ENCODE measurements at regions of chr2 and their contacts with region 1.

Region 1: GRCh38 chr2:96260404-96261260 is 5.2 kb downstream of the TMEM127 start:
- DNase-seq: peak; percentile 93
- ATAC-seq: peak; percentile 88
- H3K4me3 ChIP-seq: peak overlapping the region in 1 of 2 experiments; percentile 5; a peak in 1 of 4 replicates
- H3K27ac ChIP-seq: peak overlapping the region; percentile 67
- H3K4me1 ChIP-seq: peaks cover 36% of the 10 kb centered on the region
- H3K27me3 ChIP-seq: no peaks in the 10 kb centered on the region
- CTCF ChIP-seq: peak; percentile 83

Region 2: GRCh38 chr2:95552911-95553310 is 707.7 kb before region 1 on chr2:
- CTCF ChIA-PET with region 1: no interaction called
- POLR2A ChIA-PET with region 1: no interaction called
- in situ Hi-C with region 1: no loop called
- intact Hi-C with region 1: no loop called
- DNase-seq: no peak
- ATAC-seq: no peak
- H3K4me3 ChIP-seq: no peak overlapping the region
- H3K27ac ChIP-seq: no peak overlapping the region
- H3K4me1 ChIP-seq: no peaks in the 10 kb centered on the region
- H3K27me3 ChIP-seq: peaks cover 4% of the 10 kb centered on the region; the same call in 1 of the 2 replicates
- CTCF ChIP-seq: no peak

Region 3: GRCh38 chr2:96116879-96117697 is 143.5 kb before region 1 on chr2:
- CTCF ChIA-PET with region 1: no interaction called
- POLR2A ChIA-PET with region 1: no interaction called
- in situ Hi-C with region 1: no loop called
- intact Hi-C with region 1: no loop called
- DNase-seq: no peak
- ATAC-seq: peak; percentile 89
- H3K4me3 ChIP-seq: peak overlapping the region; percentile 33 to 44
- H3K27ac ChIP-seq: no peak overlapping the region
- H3K4me1 ChIP-seq: no peaks in the 10 kb centered on the region
- H3K27me3 ChIP-seq: no peaks in the 10 kb centered on the region; the same call in 1 of the 2 replicates
- CTCF ChIP-seq: peak; percentile 98

Region 4: GRCh38 chr2:96208143-96209010 is 52.3 kb before region 1 on chr2 and contains the start of gene STARD7:
- CTCF ChIA-PET with region 1: no interaction called
- POLR2A ChIA-PET with region 1: no interaction called
- in situ Hi-C with region 1: no loop called
- intact Hi-C with region 1: loop called (anchors 5 kb)
- DNase-seq: peak; percentile 83
- ATAC-seq: peak; percentile 98
- H3K4me3 ChIP-seq: peak within 1 kb of the TSS; percentile 73 to 91
- H3K27ac ChIP-seq: peak within 1 kb of the TSS; percentile 98
- H3K4me1 ChIP-seq: peaks cover 33% of the 10 kb centered on the region
- H3K27me3 ChIP-seq: no peaks in the 10 kb centered on the region
- CTCF ChIP-seq: peak; percentile 46; the same call in 1 of the 2 replicates
- total RNA-seq, gene STARD7: 133 TPM

Region 5: GRCh38 chr2:96231316-96231715 is 29.3 kb before region 1 on chr2:
- CTCF ChIA-PET with region 1: interaction called, 3 read pairs
- POLR2A ChIA-PET with region 1: interaction called, 12 read pairs
- in situ Hi-C with region 1: no loop called
- intact Hi-C with region 1: no loop called
- DNase-seq: no peak
- ATAC-seq: no peak
- H3K4me3 ChIP-seq: no peak overlapping the region
- H3K27ac ChIP-seq: no peak overlapping the region
- H3K4me1 ChIP-seq: no peaks in the 10 kb centered on the region
- H3K27me3 ChIP-seq: no peaks in the 10 kb centered on the region
- CTCF ChIP-seq: no peak

Region 6: GRCh38 chr2:96485751-96486651 is 225.4 kb after region 1 on chr2:
- CTCF ChIA-PET with region 1: interaction called, 7 read pairs
- POLR2A ChIA-PET with region 1: interaction called, 14 read pairs
- in situ Hi-C with region 1: no loop called
- intact Hi-C with region 1: no loop called
- DNase-seq: no peak
- ATAC-seq: peak; percentile 93
- H3K4me3 ChIP-seq: peak overlapping the region; percentile 27 to 51
- H3K27ac ChIP-seq: peak overlapping the region; percentile 66
- H3K4me1 ChIP-seq: peaks cover 9% of the 10 kb centered on the region; the same call in 1 of the 2 replicates
- H3K27me3 ChIP-seq: no peaks in the 10 kb centered on the region
- CTCF ChIP-seq: no peak